Left cardiac atrium (tissue), 4 donors: ENCODE measurements at regions of chr16 and their contacts with region 1.

Region 1: DNA sequence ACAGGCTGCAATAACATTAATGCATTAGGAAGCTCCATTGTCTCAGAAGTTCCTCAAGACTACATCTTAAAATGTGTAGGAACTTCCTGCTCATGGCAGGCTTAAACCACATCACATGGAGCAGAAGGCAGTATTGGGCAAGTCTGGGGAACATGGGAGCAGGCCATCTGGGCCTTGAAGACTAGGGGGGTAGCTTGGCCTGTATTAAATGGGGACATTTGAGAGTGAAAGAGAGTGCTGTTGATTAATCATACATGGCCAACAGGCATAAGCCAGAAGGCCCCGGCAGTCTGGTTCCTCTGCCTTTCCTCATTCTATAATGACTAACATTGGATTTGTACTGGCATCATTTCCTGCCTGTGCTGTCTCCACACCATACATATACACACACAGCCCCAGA is 25.2 kb upstream of the SLC5A11 start:
- DNase-seq: no peak
- ATAC-seq: no peak

Region 2: GRCh38 chr16:24925163-24925562 is 104.6 kb after region 1 on chr16:
- intact Hi-C with region 1: no loop called
- DNase-seq: no peak
- ATAC-seq: no peak

Region 3: GRCh38 chr16:24939234-24939633 is 118.7 kb after region 1 on chr16:
- intact Hi-C with region 1: loop called in 1 of 2 experiments (anchors 10 kb)
- DNase-seq: no peak
- ATAC-seq: no peak